ENCODE measurements at regions of chr18 and their contacts with region 1.

Region 1: GRCh38 chr18:25946540-25946939 is 143.9 kb downstream of the SS18 start:
- DNase-seq: no peak
- ATAC-seq: no peak
- H3K4me3 ChIP-seq: no peak overlapping the region
- H3K27ac ChIP-seq: no peak overlapping the region
- H3K4me1 ChIP-seq: no peaks in the 10 kb centered on the region
- H3K27me3 ChIP-seq: no peaks in the 10 kb centered on the region
- CTCF ChIP-seq: no peak
- POLR2A ChIP-seq: no peak

Region 2: DNA sequence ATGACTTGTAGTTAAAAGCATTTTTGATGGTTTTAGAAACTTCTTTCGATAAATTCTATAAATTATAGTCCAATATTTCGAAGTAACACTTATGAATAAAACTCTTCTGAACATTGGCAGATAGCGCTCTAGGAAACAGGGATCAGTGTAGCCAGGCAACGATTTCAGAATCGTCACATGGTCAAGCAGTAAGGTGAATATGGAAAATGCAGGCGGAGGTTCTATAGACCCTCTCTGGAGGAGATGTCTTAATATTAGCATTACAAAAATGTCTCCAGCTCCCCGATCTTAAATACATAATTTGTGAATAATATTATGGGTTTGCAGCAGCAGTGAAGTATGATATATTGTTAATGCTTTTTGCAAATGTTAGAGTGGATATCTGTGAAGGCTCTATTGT is 166.4 kb before region 1 on chr18:
- intact Hi-C with region 1: no loop called
- DNase-seq: no peak
- ATAC-seq: no peak
- H3K4me3 ChIP-seq: no peak overlapping the region
- H3K27ac ChIP-seq: no peak overlapping the region
- H3K4me1 ChIP-seq: no peaks in the 10 kb centered on the region
- H3K27me3 ChIP-seq: no peaks in the 10 kb centered on the region
- CTCF ChIP-seq: no peak
- POLR2A ChIP-seq: no peak

Region 3: GRCh38 chr18:26003356-26003755 is 56.8 kb after region 1 on chr18:
- intact Hi-C with region 1: loop called in 1 of 10 experiments (anchors 10 kb)
- DNase-seq: no peak
- ATAC-seq: no peak
- H3K4me3 ChIP-seq: no peak overlapping the region
- H3K27ac ChIP-seq: no peak overlapping the region
- H3K4me1 ChIP-seq: no peaks in the 10 kb centered on the region
- H3K27me3 ChIP-seq: no peaks in the 10 kb centered on the region
- CTCF ChIP-seq: no peak
- POLR2A ChIP-seq: no peak

Measured in heart left ventricle (tissue), 16 donors.